ENCODE measurements at regions of chr6 and their contacts with region 1.

Region 1: DNA sequence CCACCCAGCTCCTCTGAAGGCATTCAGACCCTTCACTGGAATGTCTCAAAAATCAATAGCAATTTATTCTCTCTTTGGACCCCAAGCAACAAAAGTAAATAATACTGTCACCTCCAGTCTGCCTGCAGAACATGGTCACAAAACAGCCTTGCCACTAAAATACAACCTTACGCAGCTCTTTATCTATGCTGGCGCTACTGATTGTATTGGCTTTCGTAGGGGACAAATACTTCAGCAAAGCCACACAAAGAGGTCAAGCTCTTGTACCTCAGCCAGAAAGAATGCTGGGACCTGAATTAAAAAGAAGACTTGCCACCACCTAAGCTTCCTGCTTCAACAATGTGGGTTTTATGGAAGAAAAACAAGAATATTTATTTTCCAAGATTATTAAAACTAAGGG is 57.2 kb downstream of the PRKN start:
- DNase-seq: peak in 2 of 5 donors; percentile 16 to 28
- ATAC-seq: peak; percentile 82 to 92 (median 90)
- H3K4me3 ChIP-seq: peak overlapping the region in 3 of 12 donors; percentile 15 to 24 (median 20)
- H3K27ac ChIP-seq: peak overlapping the region; percentile 42 to 84 (median 76)
- H3K4me1 ChIP-seq: peaks cover 0 to 9% (median 0%) of the 10 kb centered on the region in 12 donors
- H3K27me3 ChIP-seq: no peaks in the 10 kb centered on the region
- CTCF ChIP-seq: no peak
- POLR2A ChIP-seq: no peak

Region 2: DNA sequence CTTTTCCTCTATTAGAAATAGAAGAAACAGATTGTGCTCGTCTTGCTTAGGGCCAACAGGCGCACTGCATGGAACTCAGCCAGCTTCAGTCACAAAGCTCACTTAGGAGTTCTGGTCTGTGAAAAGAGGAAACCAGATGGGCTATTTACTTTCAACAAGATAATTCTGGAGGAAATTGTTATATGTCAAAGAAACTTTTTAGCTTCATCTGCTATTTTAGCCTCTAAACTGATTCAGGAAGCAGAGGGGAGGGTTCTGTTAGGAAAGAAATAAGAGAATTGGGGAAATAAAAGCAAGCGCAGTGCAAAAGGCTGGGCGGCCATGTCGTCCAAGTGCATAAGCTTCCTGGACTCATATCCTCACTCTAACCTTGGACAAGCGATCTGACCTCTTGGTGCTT is 35.9 kb after region 1 on chr6:
- intact Hi-C with region 1: loop called in 1 of 10 experiments (anchors 5 kb)
- DNase-seq: peak; percentile 73 to 90 (median 82)
- ATAC-seq: peak; percentile 81 to 92 (median 88)
- H3K4me3 ChIP-seq: peak overlapping the region in 10 of 12 donors; percentile 2 to 43 (median 20)
- H3K27ac ChIP-seq: peak overlapping the region; percentile 62 to 86 (median 76)
- H3K4me1 ChIP-seq: peaks cover 4 to 29% (median 19%) of the 10 kb centered on the region in 12 donors
- H3K27me3 ChIP-seq: no peaks in the 10 kb centered on the region
- CTCF ChIP-seq: no peak
- POLR2A ChIP-seq: no peak

Measured in heart left ventricle (tissue), 16 donors.